PC-3 (cell line): ENCODE measurements at regions of chr11 and their contacts with region 1.

Region 1: GRCh38 chr11:2151500-2152257 is 9.3 kb downstream of the INS start:
- DNase-seq: peak; percentile 85
- ATAC-seq: peak; percentile 37
- H3K4me3 ChIP-seq: peak overlapping the region; percentile 33; the same call in 1 of the 2 replicates
- H3K27ac ChIP-seq: no peak overlapping the region
- H3K4me1 ChIP-seq: peaks cover 10% of the 10 kb centered on the region
- H3K27me3 ChIP-seq: peaks cover 17% of the 10 kb centered on the region
- CTCF ChIP-seq: peak; percentile 66

Region 2: DNA sequence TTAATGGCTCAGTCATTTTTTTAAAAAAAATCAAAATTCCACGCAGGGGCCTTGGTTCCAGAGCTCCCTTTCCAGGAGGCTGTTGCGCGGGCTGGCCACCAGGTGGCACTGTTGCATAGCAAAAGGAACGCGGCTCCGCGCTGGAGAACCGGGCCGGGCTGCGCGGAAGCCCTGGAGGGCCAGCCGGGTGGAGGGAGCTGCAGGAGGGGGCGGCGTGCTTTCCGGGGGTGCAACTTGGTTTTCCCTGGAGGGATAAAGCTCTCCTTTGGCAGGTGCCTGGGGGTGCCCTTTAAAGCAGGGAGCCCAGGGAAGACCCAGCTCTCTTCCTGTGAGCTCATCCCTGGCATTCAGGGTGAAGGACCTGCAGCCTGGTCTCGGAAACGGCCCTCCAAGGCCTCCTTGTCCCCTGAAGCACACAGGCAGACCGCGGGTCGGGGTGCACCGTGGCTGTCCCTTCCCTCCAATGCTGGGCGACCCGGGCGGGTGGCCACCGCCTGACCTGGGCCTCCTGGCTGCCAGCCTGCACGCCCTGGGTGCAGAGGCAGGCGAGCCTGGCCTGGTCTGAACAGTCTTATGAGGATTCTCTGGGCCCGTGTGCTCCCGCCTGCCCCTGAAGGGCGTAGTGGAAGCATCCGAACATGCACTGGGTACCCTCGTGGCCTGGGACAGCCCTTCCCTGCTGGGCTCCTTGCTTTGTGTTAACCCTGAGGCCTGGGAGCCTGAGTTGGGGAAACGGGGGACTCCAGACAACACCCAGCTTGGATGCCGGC is 498.7 kb before region 1 on chr11:
- CTCF ChIA-PET with region 1: interaction called, 14 read pairs
- POLR2A ChIA-PET with region 1: no interaction called
- intact Hi-C with region 1: loop called (anchors 2 kb)
- DNase-seq: peak; percentile 70
- ATAC-seq: peak; percentile 89
- H3K4me3 ChIP-seq: no peak overlapping the region
- H3K27ac ChIP-seq: no peak overlapping the region
- H3K4me1 ChIP-seq: no peaks in the 10 kb centered on the region
- H3K27me3 ChIP-seq: 0 out of 2 replicates have a peak, but pooled peaks cover 5% of the 10 kb centered on the region
- CTCF ChIP-seq: peak; percentile 91

Region 3: DNA sequence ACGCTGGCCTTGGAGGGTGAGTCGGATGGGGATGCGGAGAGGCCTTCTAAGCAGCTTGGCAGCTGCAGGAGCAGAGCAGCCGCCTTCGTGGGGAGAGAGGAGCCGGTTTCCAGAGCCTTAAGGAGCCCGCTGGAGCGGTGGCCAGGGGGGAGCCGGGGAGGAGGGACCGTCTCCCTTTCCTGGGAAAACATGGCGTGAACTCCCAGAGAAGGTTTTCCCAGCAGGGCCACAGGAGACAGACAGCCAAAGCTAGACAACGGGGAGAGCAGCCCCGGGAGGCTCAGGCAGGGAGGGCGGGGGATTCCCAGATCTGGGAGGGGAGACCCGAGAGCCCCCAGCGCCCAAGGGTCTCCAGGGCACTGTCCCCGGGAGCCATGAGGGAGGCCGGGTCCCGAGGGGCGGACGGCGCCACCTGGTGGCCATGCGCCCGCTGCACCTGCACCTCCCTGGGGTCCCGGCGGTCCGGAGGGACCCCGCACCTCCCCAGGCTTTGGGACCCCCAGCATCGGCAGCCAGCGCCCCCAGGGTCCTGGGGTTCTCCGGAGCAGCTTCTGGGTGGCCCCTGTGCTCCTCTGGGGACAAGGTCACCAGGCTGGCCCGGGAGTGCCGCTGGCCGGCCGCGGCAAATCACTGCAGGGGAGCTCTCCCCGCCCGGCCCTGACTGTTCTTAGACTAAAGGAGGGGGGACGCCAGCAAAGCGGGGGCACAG is 319.3 kb before region 1 on chr11:
- CTCF ChIA-PET with region 1: interaction called, 20 read pairs
- POLR2A ChIA-PET with region 1: interaction called, 5 read pairs
- intact Hi-C with region 1: loop called (anchors 10 kb)
- DNase-seq: peak; percentile 41
- ATAC-seq: peak; percentile 32
- H3K4me3 ChIP-seq: peak overlapping the region; percentile 56; the same call in 1 of the 2 replicates
- H3K27ac ChIP-seq: no peak overlapping the region
- H3K4me1 ChIP-seq: peaks cover 59% of the 10 kb centered on the region
- H3K27me3 ChIP-seq: no peaks in the 10 kb centered on the region
- CTCF ChIP-seq: peak; percentile 92

Region 4: DNA sequence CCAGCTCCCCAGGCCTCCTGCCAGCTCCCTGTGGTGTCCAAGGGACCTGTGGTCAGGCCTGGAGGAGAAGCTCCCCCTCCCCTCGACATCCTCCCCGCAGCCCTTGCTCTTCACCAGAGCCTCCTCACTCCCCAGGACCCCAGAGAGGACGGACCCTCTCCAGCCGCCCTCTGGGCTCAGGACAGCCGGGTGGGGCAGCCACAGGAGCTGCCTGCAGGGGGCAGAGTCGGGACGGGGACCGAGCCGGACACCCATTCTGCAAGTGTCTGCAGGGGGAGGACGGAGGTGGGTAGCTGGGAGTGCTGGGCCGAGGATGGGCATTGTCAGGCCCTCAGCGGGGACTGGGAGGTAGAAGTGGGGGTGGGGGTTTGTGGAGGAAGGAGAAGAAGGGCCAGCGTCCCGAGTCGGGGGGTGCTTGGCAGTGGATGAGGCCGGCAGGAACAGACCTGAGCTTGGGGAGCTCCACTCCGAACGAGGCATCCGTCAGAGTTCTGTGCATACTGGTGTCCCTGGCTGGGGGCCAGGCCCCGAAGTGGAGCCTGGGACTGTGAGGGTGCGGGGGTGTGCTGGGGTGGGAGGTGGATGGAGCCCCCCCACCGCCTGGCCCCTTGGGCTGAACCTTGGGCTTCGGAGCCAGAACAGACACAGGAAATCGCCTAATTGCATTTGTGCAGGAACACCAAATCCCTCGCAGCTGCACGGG is 275.2 kb before region 1 on chr11:
- CTCF ChIA-PET with region 1: interaction called, 20 read pairs
- POLR2A ChIA-PET with region 1: no interaction called
- intact Hi-C with region 1: no loop called
- DNase-seq: peak; percentile 46
- ATAC-seq: 0 out of 2 replicates have a peak, but pooled peaks have one; percentile 24
- H3K4me3 ChIP-seq: no peak overlapping the region
- H3K27ac ChIP-seq: no peak overlapping the region
- H3K4me1 ChIP-seq: no peaks in the 10 kb centered on the region
- H3K27me3 ChIP-seq: no peaks in the 10 kb centered on the region
- CTCF ChIP-seq: peak; percentile 72

Region 5: GRCh38 chr11:2036863-2037486 is 114.7 kb before region 1 on chr11:
- CTCF ChIA-PET with region 1: interaction called, 54 read pairs
- POLR2A ChIA-PET with region 1: no interaction called
- intact Hi-C with region 1: no loop called
- DNase-seq: no peak
- ATAC-seq: peak; percentile 59
- H3K4me3 ChIP-seq: no peak overlapping the region
- H3K27ac ChIP-seq: no peak overlapping the region
- H3K4me1 ChIP-seq: no peaks in the 10 kb centered on the region
- H3K27me3 ChIP-seq: no peaks in the 10 kb centered on the region
- CTCF ChIP-seq: no peak

Region 6: GRCh38 chr11:2109541-2110019 is 42.1 kb before region 1 on chr11:
- CTCF ChIA-PET with region 1: no interaction called
- POLR2A ChIA-PET with region 1: no interaction called
- intact Hi-C with region 1: no loop called
- DNase-seq: no peak
- ATAC-seq: no peak
- H3K4me3 ChIP-seq: no peak overlapping the region
- H3K27ac ChIP-seq: no peak overlapping the region
- H3K4me1 ChIP-seq: no peaks in the 10 kb centered on the region
- H3K27me3 ChIP-seq: no peaks in the 10 kb centered on the region
- CTCF ChIP-seq: no peak